ENCODE measurements at regions of chr18 and their contacts with region 1.

Region 1: GRCh38 chr18:2948038-2948437 is 64.9 kb downstream of the LPIN2 start:
- DNase-seq: no peak
- H3K4me3 ChIP-seq: no peak overlapping the region
- H3K27ac ChIP-seq: no peak overlapping the region
- H3K27me3 ChIP-seq: no peaks in the 10 kb centered on the region
- CTCF ChIP-seq: peak; percentile 56

Region 2: DNA sequence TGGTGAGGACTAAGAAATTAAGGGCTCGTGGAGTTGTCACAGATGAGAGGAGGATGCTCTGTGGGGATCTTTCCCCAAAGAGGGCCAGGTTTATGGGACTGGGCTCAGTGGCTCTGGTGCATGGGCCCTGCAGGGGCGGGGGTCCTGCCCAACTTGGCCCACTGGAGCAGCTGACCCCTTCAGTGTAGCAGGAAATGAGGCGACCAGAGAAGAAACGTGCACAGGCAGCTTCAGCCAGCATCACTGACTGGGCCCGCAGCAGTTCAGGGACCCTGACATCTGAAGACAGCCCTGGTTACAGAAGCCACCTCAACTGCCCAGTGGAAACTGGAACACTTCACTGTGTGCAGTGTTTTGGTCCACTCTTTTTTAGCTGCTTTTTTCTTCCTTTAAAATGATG is 28.4 kb before region 1 on chr18:
- CTCF ChIA-PET with region 1: no interaction called
- POLR2A ChIA-PET with region 1: no interaction called
- DNase-seq: no peak
- H3K4me3 ChIP-seq: no peak overlapping the region
- H3K27ac ChIP-seq: no peak overlapping the region
- H3K27me3 ChIP-seq: no peaks in the 10 kb centered on the region
- CTCF ChIP-seq: no peak

Region 3: DNA sequence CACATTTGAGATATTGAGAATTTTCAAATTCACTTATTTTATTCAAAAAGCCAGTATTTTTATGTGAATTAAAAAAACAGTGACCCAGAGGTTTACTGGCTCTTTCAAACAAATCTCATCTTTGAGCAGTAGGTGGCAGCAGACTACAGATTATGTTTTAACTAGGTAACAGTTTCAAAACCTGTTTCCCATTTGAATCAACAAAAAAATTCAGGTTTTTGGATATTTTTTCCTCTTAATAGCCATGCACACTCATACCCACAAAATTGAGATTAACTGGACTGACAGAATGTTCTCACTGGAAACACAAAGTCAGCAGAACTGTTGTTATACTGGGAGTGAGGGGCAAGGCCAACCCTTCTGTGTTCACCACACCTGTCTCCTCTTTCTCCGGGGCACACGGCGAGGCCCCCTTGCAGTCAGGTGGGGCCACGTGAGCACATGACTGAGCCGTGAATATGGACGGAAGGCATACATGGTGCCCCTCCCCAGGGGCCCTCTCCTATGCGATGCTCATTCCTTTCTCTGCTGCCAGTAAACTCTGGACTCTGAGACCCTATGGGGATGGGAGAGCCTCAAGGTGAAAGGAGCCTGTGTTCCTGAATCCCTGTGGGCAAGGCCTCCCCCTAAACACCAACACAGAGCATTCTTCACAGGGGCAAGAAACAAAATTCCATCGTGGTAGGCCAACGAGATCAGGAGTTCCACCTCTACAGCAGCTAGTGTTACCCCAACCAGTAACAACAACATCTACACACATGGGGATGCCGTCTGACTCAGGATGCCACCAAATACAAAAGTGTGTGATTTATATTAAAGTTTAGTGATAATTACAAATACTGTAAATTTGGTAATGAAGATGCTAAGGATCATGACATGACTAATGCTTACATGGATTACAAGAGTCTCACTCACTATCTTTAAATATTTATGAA is 15.5 kb before region 1 on chr18:
- CTCF ChIA-PET with region 1: interaction called, 13 read pairs
- POLR2A ChIA-PET with region 1: no interaction called
- DNase-seq: peak; percentile 21
- H3K4me3 ChIP-seq: no peak overlapping the region
- H3K27ac ChIP-seq: no peak overlapping the region
- H3K27me3 ChIP-seq: no peaks in the 10 kb centered on the region
- CTCF ChIP-seq: peak; percentile 64

Region 4: DNA sequence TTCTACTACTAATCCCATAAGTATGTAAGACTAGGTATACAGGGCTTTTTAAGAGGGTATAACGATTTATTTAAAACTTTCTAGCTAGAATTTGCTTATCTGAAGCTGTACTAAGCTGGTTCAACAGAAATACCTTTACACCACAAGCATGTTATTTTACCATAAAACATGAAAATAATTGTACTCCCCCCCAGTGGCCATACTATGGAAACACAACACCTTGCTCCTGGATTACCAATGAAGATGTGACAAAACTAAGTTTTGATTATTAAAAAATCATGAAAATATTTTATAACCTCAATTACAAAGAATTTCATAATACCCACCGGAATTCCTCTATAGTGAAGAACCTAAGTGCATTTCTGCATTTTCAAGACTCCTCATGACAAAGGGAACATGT is 37.6 kb after region 1 on chr18:
- CTCF ChIA-PET with region 1: interaction called, 25 read pairs
- POLR2A ChIA-PET with region 1: interaction called, 5 read pairs
- DNase-seq: no peak
- H3K4me3 ChIP-seq: no peak overlapping the region
- H3K27ac ChIP-seq: no peak overlapping the region
- H3K27me3 ChIP-seq: no peaks in the 10 kb centered on the region
- CTCF ChIP-seq: peak; percentile 46